Sciatic nerve (tissue), 2 donors: ENCODE measurements at regions of chrX and their contacts with region 1.

Region 1: DNA sequence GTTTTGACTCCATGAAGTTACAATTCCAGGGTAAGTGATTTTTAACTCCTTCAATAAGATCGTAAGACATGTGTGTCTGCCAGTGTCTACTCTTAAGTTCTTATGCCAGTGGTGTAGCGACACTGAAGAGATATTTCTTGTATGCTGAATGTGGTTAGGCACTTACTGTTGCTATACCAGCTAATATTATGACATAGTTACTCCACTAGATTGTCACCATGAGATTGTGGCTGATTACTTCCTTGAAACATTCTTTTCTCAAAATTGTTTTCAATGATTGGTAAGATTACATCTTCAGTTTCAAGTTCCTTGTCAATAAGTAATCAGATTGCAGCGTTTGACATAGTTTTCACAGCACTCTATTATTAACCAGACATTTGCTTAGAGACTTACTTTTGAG is 60.6 kb upstream of the PAGE5 start:
- DNase-seq: no peak
- ATAC-seq: no peak

Region 2: DNA sequence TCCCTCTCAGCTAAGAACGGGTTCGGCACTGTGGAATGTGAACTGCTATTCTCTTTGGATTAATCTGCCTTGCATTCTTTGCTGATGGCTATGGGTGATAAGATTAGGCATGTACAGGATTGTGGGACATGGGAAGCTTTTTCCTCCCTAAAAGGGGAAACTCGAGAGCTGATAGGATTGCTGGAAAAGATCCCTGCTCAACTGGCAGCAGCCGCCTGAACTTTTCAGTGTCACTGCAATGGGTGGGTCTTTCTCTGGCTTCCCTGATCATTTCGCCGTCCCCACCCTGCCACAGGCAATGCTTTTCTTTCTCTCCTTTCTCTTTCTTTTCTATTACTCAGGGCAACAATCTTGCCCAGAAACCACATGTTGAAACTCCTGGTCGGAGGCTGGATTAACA is 50.2 kb before region 1 on chrX:
- intact Hi-C with region 1: no loop called
- DNase-seq: no peak
- ATAC-seq: no peak

Region 3: DNA sequence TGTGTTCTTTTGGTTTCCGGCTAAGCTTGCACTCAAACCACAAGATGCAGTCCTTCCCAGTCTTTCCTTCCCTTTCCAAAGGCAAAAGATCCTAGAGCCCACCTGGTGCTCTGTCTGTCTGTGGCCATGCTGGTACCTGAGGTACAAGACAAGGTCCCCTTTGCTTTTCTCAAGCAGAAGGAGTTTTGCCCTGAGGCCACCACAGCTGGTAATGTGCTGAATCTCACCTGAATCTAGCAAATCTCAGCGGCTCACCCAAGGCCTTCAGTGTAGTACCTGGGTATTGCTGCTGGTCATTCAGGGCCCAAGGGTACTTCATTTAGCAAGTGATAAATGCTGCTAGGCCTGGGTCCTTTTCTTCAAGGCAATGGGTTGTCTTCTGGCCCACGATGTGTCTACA is 1052.2 kb after region 1 on chrX:
- intact Hi-C with region 1: loop called (anchors 5 kb)
- DNase-seq: no peak
- ATAC-seq: no peak